Lower leg skin (tissue), 4 donors: ENCODE measurements at regions of chr11 and their contacts with region 1.

Region 1: GRCh38 chr11:62694455-62695167 is 5.3 kb upstream of the LRRN4CL start:
- DNase-seq: peak; percentile 77 to 96
- H3K4me3 ChIP-seq: no peak overlapping the region
- CTCF ChIP-seq: peak in 1 of 3 donors; percentile 40
- POLR2A ChIP-seq: no peak

Region 2: DNA sequence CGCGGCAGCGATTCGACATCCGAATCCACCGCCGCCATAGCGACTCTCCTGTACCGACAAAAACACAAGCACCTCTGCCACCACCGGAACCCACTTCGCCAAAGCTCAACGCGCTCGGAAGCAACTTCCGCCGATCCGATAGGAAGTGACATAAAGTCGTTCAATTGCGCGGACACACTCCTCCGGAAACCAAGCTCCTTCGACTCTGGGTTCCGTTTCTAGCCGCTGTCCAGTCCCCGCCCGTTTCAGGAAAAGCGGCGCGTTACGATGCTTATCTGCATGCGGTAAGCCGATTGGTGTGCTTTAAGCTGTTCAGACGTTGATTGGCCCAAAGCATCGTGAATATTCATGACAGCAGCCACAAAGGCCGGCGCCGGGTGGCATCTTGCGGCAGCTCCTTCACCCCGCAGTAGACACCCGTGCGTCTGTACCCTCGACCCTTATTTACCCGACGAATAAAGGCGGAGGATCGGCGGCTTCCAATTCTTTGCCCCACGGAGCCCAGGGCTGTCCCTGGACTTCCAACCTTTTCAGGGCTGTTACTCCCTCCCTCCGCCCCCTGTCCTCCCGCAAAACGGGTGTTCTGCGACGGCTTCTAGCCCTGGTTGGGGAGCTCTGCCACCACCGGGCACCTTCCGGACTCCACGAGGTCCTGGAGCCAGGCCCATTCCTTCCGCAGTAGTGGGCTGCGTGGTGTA is 103.0 kb before region 1 on chr11 and contains the start of gene TUT1:
- intact Hi-C with region 1: loop called (anchors 10 kb)
- DNase-seq: peak; percentile 98 to 99
- H3K4me3 ChIP-seq: peak within 1 kb of the TSS; percentile 67
- CTCF ChIP-seq: no peak
- POLR2A ChIP-seq: peak in 1 of 2 donors; percentile 91
- total RNA-seq, gene TUT1: 11.0 to 29.8 (median 15.8) TPM

Region 3: DNA sequence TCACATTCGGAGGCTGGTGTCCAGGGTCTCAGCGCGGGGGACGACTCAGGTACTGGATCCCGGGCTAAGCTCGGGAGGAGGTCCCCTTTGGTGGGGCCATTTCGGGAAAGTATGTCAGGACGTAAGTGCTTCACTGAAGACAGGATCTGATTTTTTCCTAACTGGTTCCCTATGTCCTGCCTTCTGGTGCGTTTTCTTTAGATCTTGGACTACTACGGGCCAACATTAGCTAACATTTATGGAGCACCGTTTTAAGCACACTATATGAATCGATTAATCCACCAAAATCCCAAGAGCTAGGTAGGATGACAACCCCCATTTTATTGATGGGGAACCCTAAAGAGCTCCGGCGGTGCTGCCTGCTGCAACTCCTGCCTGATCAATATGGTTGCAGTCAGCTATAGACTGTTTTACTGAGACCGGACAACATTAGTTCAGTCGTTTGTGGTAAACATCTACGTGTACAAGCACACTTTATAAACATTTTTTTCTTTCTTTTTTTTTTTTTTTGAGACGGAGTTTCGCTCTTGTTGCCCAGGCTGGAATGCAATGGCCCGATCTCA is 161.8 kb after region 1 on chr11:
- intact Hi-C with region 1: no loop called
- DNase-seq: no peak
- H3K4me3 ChIP-seq: peak overlapping the region; percentile 28
- CTCF ChIP-seq: no peak
- POLR2A ChIP-seq: no peak